Activated CD4-positive, alpha-beta T cell treated with anti-CD3 and anti-CD28 coated beads for 36 hours (primary cell): ENCODE measurements at regions of chr1 and their contacts with region 1.

Region 1: DNA sequence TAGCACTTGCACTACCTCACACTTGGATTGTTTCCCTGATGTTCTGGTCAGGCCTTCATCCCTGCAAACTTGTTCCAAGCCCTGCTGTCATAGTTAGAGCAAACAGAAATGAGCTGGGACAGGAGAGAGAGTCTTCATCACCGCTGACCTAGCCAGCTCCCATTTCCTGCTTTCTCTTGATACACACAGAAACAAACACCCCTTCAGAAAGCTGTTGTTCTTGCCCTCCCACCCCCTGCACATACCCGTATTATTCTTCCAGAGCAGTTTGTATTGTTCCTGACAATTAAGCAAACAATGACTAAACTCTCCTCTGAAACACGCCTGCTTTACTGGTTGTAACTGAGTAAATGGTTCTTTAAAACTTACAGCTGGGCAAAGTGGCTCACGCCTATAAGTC is 2.9 kb upstream of the SYT2 start:
- DNase-seq: no peak
- ATAC-seq: no peak
- H3K4me3 Mint-ChIP-seq: no peak overlapping the region
- H3K27ac Mint-ChIP-seq: no peak overlapping the region
- H3K4me1 Mint-ChIP-seq: no peaks in the 10 kb centered on the region
- H3K27me3 Mint-ChIP-seq: peaks cover 39% of the 10 kb centered on the region

Region 2: GRCh38 chr1:202192770-202193613 is 520.1 kb before region 1 on chr1:
- CTCF ChIA-PET with region 1: interaction called, 3 read pairs
- POLR2A ChIA-PET with region 1: no interaction called
- intact Hi-C with region 1: loop called (anchors 2 to 5 kb)
- DNase-seq: peak; percentile 75
- ATAC-seq: peak; percentile 33
- H3K4me3 Mint-ChIP-seq: no peak overlapping the region
- H3K27ac Mint-ChIP-seq: no peak overlapping the region
- H3K4me1 Mint-ChIP-seq: peaks cover 2% of the 10 kb centered on the region
- H3K27me3 Mint-ChIP-seq: peaks cover 20% of the 10 kb centered on the region

Region 3: DNA sequence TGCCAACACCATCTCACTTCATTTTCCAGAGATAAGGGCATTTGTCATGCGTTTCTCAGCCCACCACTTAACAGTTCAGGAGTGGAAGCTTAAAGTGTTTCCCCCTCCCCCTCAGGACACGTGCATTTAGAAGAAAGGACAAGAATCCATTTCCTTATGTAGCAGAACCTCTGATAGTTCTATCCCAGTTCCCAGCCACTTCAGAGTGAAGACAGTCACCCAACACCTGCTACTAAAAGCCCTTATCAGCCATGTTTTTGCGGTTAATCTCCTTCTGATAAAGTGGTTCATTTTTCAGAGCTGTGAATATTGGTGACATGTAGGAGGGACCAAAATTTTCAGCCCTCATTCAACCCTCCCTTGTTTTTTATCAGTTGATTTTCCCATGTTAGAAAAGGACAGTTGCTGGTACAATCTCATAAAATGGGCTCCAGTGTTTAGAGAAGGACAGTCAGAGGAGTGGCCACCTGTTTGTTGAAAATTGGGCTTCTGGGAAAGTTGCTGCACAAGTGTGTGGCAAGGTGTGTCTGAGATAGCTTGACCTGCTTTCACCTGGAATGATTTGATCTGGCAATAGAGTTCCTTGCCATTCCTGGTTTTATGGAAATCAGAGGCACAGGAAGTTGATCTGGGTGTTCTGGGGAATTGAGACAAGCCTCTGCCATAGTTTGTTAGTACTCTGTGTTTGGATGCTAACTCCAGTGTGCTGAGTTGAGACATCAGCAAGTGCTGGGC is 250.6 kb before region 1 on chr1:
- CTCF ChIA-PET with region 1: interaction called, 6 read pairs
- POLR2A ChIA-PET with region 1: no interaction called
- intact Hi-C with region 1: loop called in 1 of 2 experiments (anchors 2 kb)
- DNase-seq: no peak
- ATAC-seq: no peak
- H3K4me3 Mint-ChIP-seq: no peak overlapping the region
- H3K27ac Mint-ChIP-seq: no peak overlapping the region
- H3K4me1 Mint-ChIP-seq: no peaks in the 10 kb centered on the region
- H3K27me3 Mint-ChIP-seq: no peaks in the 10 kb centered on the region

Region 4: GRCh38 chr1:202702088-202702487 is 11.0 kb before region 1 on chr1:
- CTCF ChIA-PET with region 1: interaction called, 15 read pairs
- POLR2A ChIA-PET with region 1: interaction called, 3 read pairs
- intact Hi-C with region 1: no loop called
- DNase-seq: no peak
- ATAC-seq: no peak
- H3K4me3 Mint-ChIP-seq: no peak overlapping the region
- H3K27ac Mint-ChIP-seq: no peak overlapping the region
- H3K4me1 Mint-ChIP-seq: no peaks in the 10 kb centered on the region
- H3K27me3 Mint-ChIP-seq: peaks cover 32% of the 10 kb centered on the region

Region 5: GRCh38 chr1:202781180-202781579 is 68.1 kb after region 1 on chr1:
- CTCF ChIA-PET with region 1: no interaction called
- POLR2A ChIA-PET with region 1: no interaction called
- intact Hi-C with region 1: no loop called
- DNase-seq: no peak
- ATAC-seq: no peak
- H3K4me3 Mint-ChIP-seq: no peak overlapping the region
- H3K27ac Mint-ChIP-seq: no peak overlapping the region
- H3K4me1 Mint-ChIP-seq: peaks cover 18% of the 10 kb centered on the region
- H3K27me3 Mint-ChIP-seq: no peaks in the 10 kb centered on the region

Region 6: DNA sequence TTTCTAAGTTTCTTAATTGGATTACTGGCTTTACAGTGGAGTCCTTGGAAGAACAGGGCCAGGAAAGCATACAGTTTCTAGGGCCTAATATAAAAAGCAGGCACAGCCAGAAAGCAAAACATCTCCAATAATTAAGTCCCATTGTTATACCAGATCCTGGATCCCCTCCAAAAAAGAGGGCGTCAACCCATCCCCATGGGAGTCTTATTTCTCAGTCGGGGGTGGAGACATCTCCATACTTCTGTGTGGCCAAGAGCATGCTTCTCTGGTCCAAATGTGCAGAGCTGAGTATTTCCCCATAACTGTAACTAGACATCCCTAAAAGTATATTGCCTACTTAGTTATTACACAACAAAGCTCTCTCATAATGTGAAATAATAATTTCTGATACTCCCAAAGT is 1255.6 kb after region 1 on chr1:
- CTCF ChIA-PET with region 1: no interaction called
- POLR2A ChIA-PET with region 1: no interaction called
- intact Hi-C with region 1: no loop called
- DNase-seq: no peak
- ATAC-seq: no peak
- H3K4me3 Mint-ChIP-seq: no peak overlapping the region
- H3K27ac Mint-ChIP-seq: no peak overlapping the region
- H3K4me1 Mint-ChIP-seq: no peaks in the 10 kb centered on the region
- H3K27me3 Mint-ChIP-seq: no peaks in the 10 kb centered on the region